HepG2 (cell line): ENCODE measurements at regions of chr10 and their contacts with region 1.

Region 1: GRCh38 chr10:15879058-15879457 is 18.8 kb upstream of the MINDY3 start:
- DNase-seq: peak; percentile 44
- ATAC-seq: peak; percentile 35; the same call in 1 of the 3 replicates
- H3K4me3 ChIP-seq: no peak overlapping the region; a peak in 1 of 6 replicates
- H3K27ac ChIP-seq: no peak overlapping the region
- H3K4me1 ChIP-seq: peaks cover 18% of the 10 kb centered on the region; the same call in 1 of the 2 replicates
- H3K27me3 ChIP-seq: no peaks in the 10 kb centered on the region
- CTCF ChIP-seq: peak; percentile 67
- EP300 ChIP-seq: no peak
- POLR2A ChIP-seq: no peak
- RAD21 ChIP-seq: no peak

Region 2: DNA sequence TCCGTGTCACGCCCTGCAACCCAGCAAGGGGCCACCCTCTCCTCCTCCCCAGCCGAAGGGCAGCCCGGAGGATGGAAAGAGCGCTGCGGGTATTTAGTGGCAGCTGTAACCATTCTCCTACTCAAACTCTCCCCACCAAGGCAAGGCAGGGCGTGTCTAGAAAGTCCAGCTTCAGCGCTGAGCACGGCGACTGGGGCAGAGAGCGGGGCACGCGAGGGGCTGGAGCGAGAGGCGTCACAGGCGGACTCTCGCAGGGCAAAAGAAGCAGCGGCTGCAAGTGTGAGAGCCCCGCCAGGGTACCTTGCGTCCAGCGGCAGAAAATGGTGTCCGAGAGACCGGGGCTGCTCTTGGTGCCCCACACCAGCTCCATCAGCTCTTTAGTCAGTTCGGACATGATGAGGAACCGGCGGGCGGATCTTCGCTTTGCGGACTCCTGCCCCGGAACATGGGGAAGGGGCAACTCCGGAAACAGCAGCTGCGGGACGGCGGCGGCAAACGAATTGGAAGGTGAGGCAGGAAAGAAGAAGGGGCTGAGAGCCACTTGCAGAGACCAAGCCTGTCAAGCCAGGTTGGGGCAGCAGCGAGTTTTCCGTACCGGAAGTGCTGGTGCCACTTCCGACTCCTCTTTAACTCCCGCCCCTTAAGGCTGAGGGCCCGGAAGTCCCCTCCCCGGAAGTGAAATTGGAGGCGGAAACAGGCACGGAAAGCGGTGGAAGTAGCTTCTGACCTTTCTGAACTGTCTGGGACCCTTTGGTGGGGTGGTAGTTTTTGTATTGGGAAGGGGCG is 19.0 kb before region 1 on chr10 and contains the start of gene MINDY3:
- CTCF ChIA-PET with region 1: no interaction called
- POLR2A ChIA-PET with region 1: interaction called, 10 read pairs
- in situ Hi-C with region 1: no loop called
- intact Hi-C with region 1: no loop called
- DNase-seq: peak; percentile 83
- ATAC-seq: peak; percentile 99
- H3K4me3 ChIP-seq: peak within 1 kb of the TSS; percentile 83 to 90 (median 88)
- H3K27ac ChIP-seq: peak within 1 kb of the TSS; percentile 55
- H3K4me1 ChIP-seq: peaks cover 21% of the 10 kb centered on the region
- H3K27me3 ChIP-seq: no peaks in the 10 kb centered on the region; a peak in 1 of 5 replicates
- CTCF ChIP-seq: 0 out of 2 replicates have a peak, but pooled peaks have one; percentile 23
- EP300 ChIP-seq: no peak
- POLR2A ChIP-seq: peak; percentile 63 to 85
- RAD21 ChIP-seq: no peak
- total RNA-seq, gene MINDY3: 17.5 and 17.8 TPM in 2 replicates

Region 3: GRCh38 chr10:16001581-16001980 is 122.5 kb after region 1 on chr10:
- CTCF ChIA-PET with region 1: no interaction called
- POLR2A ChIA-PET with region 1: no interaction called
- in situ Hi-C with region 1: no loop called
- intact Hi-C with region 1: no loop called
- DNase-seq: no peak
- ATAC-seq: no peak
- H3K4me3 ChIP-seq: no peak overlapping the region
- H3K27ac ChIP-seq: no peak overlapping the region
- H3K4me1 ChIP-seq: no peaks in the 10 kb centered on the region
- H3K27me3 ChIP-seq: no peaks in the 10 kb centered on the region
- CTCF ChIP-seq: no peak
- EP300 ChIP-seq: no peak
- POLR2A ChIP-seq: no peak
- RAD21 ChIP-seq: no peak

Region 4: DNA sequence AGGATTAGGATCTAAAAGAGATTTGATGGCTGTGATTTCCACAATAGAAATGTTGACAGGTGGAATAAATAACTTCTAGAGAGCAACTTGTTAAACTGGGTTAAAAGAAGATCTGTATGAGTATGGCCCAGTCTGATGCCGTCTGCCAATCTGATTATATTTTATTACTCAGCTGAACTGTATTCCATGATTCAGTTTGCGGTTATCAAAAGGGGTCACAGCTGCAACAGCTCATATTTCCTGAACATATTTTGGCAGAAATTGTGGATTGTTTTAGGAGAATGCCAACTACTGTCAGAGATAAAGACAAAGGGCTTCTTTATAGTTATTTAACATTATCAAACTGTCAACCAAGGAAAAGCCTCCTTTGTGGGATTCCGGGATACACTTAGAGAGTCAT is 226.0 kb after region 1 on chr10:
- CTCF ChIA-PET with region 1: no interaction called
- POLR2A ChIA-PET with region 1: no interaction called
- in situ Hi-C with region 1: no loop called
- intact Hi-C with region 1: no loop called
- DNase-seq: no peak
- ATAC-seq: no peak
- H3K4me3 ChIP-seq: no peak overlapping the region
- H3K27ac ChIP-seq: no peak overlapping the region
- H3K4me1 ChIP-seq: no peaks in the 10 kb centered on the region
- H3K27me3 ChIP-seq: no peaks in the 10 kb centered on the region
- CTCF ChIP-seq: no peak
- EP300 ChIP-seq: no peak
- POLR2A ChIP-seq: no peak
- RAD21 ChIP-seq: no peak

Region 5: GRCh38 chr10:16545116-16545736 is 666.2 kb after region 1 on chr10:
- CTCF ChIA-PET with region 1: interaction called, 9 read pairs
- POLR2A ChIA-PET with region 1: no interaction called
- in situ Hi-C with region 1: loop called (anchors 25 kb)
- intact Hi-C with region 1: loop called (anchors 10 kb)
- DNase-seq: peak; percentile 13
- ATAC-seq: peak; percentile 57
- H3K4me3 ChIP-seq: no peak overlapping the region
- H3K27ac ChIP-seq: no peak overlapping the region
- H3K4me1 ChIP-seq: no peaks in the 10 kb centered on the region
- H3K27me3 ChIP-seq: peaks cover 0 to 4% of the 10 kb centered on the region in 2 experiments; a peak in 1 of 5 replicates
- CTCF ChIP-seq: peak; percentile 66
- EP300 ChIP-seq: no peak
- POLR2A ChIP-seq: no peak
- RAD21 ChIP-seq: no peak

Region 6: DNA sequence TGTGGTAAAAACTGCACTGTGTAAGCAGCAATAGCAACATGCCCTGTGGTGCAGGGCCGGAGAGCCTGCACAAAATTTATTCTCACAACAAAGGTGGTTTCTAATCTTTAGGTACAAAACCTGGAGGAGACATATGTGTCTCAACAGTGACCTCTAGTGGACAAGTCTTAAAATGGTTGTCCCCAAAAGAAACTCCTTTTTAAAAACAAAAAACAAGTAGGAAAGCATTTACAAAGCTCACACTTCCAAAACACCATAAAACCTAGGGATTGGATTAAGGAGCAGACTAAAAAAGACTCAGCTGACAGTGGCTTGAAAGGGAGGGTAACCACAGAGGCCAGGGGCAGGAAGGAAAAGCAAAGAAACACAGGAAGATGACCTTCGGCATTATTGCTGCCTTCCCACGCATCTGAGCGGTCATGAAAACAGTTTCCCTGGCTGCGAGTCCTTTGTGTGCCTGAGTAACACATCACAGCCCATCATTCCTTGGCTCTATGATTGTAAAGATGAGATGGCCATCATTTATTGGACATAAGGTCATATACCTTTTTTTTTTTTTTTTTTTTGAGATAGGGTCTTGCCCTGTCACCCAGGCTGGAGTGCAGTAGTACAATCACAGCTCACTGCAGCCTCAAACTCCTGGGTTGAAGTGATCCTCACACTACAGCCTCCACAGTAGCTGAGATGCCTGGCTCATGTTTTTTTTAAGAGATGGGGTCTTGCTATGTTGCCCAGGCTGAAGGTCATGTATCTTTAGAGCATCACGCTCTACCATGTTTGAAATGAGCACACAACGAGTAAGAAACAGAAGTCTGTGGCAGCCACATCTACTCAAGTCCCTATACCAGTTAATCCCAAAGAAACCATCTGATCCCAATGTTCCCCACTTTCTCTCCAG is 898.7 kb after region 1 on chr10:
- CTCF ChIA-PET with region 1: interaction called, 5 read pairs
- POLR2A ChIA-PET with region 1: no interaction called
- in situ Hi-C with region 1: loop called (anchors 25 kb)
- intact Hi-C with region 1: loop called (anchors 1 kb)
- DNase-seq: peak; percentile 50
- ATAC-seq: peak; percentile 44; the same call in 2 of the 3 replicates
- H3K4me3 ChIP-seq: no peak overlapping the region
- H3K27ac ChIP-seq: no peak overlapping the region
- H3K4me1 ChIP-seq: 0 out of 2 replicates have a peak, but pooled peaks cover 6% of the 10 kb centered on the region
- H3K27me3 ChIP-seq: no peaks in the 10 kb centered on the region
- CTCF ChIP-seq: peak; percentile 68
- EP300 ChIP-seq: no peak
- POLR2A ChIP-seq: no peak
- RAD21 ChIP-seq: peak; percentile 25; the same call in 1 of the 2 replicates

Region 7: DNA sequence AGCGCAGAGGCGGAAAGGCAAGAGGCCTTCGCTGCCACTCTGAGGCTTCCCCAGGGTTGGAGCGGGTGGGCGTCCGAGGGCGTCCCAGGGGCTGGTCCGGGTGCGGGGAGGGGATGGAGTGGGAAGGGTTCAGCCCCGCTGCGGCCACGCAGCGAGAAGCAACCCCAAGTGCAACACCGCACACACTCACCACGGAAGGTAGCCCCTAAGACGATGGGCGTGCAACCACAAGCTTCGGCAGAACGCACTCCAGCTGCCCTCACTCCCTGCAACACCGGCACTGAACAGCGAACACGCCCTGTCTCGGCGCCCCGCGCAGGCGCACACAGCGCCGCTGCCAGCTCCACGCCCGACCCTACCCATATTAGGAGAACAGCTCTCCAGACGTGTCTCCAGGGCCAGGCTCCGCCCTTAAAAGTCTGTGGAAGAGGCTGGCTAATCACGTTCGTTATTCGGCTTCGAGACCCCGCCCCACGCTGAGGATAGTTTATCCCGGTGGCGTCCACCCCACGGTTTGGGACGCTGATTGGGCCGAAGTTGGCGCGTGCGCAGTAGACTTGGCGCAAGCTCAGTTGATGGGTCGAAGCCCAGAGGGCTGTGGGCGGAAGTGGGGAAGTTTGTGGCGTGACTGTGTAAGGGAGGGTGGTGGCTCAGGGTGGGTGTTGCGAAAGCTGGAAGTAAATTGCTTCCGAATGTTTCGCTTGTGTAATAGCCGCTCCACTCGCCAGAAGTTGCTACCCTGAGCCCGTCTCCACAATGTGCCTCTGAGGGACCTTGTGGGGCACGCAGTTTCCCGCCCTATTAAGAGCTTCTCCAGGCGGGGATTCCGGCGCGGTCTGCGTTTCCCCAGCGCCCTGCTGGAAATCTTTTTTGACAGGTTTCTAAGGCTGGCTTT is 938.3 kb after region 1 on chr10 and contains the start of gene RSU1:
- CTCF ChIA-PET with region 1: no interaction called
- POLR2A ChIA-PET with region 1: no interaction called
- in situ Hi-C with region 1: no loop called
- intact Hi-C with region 1: loop called (anchors 10 kb)
- DNase-seq: peak; percentile 99
- ATAC-seq: peak; percentile 98
- H3K4me3 ChIP-seq: peak within 1 kb of the TSS; percentile 69 to 96 (median 74)
- H3K27ac ChIP-seq: peak within 1 kb of the TSS; percentile 64
- H3K4me1 ChIP-seq: peaks cover 27% of the 10 kb centered on the region
- H3K27me3 ChIP-seq: peaks cover 0 to 7% of the 10 kb centered on the region in 2 experiments; a peak in 1 of 5 replicates
- CTCF ChIP-seq: no peak; the same call in 1 of the 2 replicates
- EP300 ChIP-seq: 0 out of 4 replicates have a peak, but pooled peaks of 1 of the 2 experiments have one; percentile 13
- POLR2A ChIP-seq: peak; percentile 87 to 97
- RAD21 ChIP-seq: no peak
- total RNA-seq, gene RSU1: 35.1 and 49.7 TPM in 2 replicates

Region 8: GRCh38 chr10:17430647-17431355 is 1551.7 kb after region 1 on chr10:
- CTCF ChIA-PET with region 1: no interaction called
- POLR2A ChIA-PET with region 1: no interaction called
- in situ Hi-C with region 1: no loop called
- intact Hi-C with region 1: loop called (anchors 5 kb)
- DNase-seq: peak; percentile 30
- ATAC-seq: peak; percentile 88
- H3K4me3 ChIP-seq: no peak overlapping the region
- H3K27ac ChIP-seq: no peak overlapping the region
- H3K4me1 ChIP-seq: no peaks in the 10 kb centered on the region
- H3K27me3 ChIP-seq: peaks cover 1 to 19% of the 10 kb centered on the region in 2 experiments; a peak in 2 of 5 replicates
- CTCF ChIP-seq: peak; percentile 77
- EP300 ChIP-seq: no peak
- POLR2A ChIP-seq: no peak
- RAD21 ChIP-seq: no peak